ENCODE measurements at regions of chr17 and their contacts with region 1.

Region 1: DNA sequence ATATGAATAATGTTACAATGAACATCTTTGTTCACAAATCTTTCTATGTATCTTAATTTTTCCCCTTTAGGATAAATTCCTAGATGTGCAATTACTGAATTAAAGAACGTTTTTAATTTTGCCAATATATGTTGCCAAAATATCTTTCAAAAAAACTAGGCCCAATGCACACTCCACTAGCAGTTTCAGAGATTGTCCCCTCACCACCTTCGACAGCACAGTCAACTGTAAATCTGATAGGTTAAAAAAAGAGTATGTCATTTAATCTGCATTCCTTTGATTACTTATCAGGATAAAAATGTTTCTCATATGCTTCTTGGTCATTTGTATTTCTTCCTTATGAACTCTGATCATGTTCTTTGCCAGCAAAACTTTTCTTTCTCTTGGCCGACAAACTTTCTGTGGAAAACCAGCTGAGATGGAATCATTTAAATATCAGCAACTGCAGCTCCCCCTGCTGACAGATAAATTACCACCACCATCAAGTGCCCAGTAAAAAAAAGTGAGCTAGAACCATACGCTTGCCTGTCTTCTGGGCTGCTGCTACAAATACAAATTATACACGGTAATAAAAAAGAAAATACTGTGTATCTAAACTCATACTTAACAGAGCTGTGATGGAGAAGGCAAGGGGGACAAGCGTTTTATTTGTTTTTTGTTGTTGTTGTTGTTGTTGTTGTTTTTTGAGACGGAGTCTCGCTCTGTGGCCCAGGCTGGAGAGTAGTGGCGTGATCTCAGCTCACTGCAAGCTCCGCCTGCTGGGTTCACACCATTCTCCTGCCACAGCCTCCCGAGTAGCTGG is 19.6 kb upstream of the KANSL1 start:
- DNase-seq: peak; percentile 72
- CTCF ChIP-seq: peak; percentile 81

Region 2: DNA sequence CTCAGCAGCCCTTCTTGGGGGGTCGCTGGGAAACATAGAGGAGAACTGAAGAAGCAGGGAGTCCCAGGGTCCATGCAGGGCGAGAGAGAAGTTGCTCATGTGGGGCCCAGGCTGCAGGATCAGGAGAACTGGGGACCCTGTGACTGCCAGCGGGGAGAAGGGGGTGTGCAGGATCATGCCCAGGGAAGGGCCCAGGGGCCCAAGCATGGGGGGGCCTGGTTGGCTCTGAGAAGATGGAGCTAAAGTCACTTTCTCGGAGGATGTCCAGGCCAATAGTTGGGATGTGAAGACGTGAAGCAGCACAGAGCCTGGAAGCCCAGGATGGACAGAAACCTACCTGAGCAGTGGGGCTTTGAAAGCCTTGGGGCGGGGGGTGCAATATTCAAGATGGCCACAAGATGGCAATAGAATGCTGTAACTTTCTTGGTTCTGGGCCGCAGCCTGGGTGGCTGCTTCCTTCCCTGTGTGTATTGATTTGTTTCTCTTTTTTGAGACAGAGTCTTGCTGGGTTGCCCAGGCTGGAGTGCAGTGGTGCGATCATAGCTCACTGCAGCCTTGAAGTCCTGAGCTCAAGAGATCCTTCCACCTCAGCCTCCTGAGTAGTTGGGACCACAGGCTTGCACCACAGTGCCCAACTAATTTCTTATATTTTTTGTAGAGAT is 210.4 kb before region 1 on chr17:
- in situ Hi-C with region 1: loop called (anchors 10 kb)
- DNase-seq: peak; percentile 85
- CTCF ChIP-seq: peak; percentile 89

Region 3: GRCh38 chr17:47099987-47100711 is 887.3 kb after region 1 on chr17:
- in situ Hi-C with region 1: loop called (anchors 5 kb)
- DNase-seq: peak; percentile 84
- CTCF ChIP-seq: no peak